ENCODE measurements at regions of chr12 and their contacts with region 1.

Region 1: DNA sequence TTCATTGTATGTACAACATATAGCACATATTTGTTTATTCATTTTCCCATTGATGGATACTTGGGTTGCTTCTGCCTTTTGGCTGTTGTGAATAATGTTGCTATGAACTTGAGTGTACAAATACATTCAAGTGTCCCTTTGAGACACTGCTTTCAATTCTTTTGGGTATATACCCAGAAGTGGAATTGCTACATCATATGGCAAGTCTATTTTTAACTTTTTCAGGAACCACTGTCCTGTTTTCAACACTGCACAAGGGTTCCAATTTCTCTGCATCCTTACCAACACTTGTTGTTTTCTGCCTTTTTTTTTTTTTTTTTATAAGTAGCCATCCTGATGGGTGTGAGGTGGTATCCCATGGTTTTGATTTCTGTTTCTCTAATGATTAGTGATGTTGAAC is 15.9 kb downstream of the RBMS2 start:
- DNase-seq: no peak
- ATAC-seq: no peak
- H3K4me3 ChIP-seq: no peak overlapping the region
- H3K4me3 Mint-ChIP-seq: no peak overlapping the region
- H3K27ac ChIP-seq: no peak overlapping the region
- H3K27ac Mint-ChIP-seq: no peak overlapping the region
- H3K4me1 ChIP-seq: no peaks in the 10 kb centered on the region
- H3K4me1 Mint-ChIP-seq: peaks cover 2 to 4% (median 3%) of the 10 kb centered on the region in 3 donors
- H3K27me3 ChIP-seq: no peaks in the 10 kb centered on the region
- H3K27me3 Mint-ChIP-seq: no peaks in the 10 kb centered on the region

Region 2: GRCh38 chr12:56657416-56658379 is 120.2 kb after region 1 on chr12:
- CTCF ChIA-PET with region 1: no interaction called
- POLR2A ChIA-PET with region 1: interaction called in 1 of 2 experiments, 12 read pairs
- DNase-seq: no peak
- ATAC-seq: no peak
- H3K4me3 ChIP-seq: no peak overlapping the region
- H3K4me3 Mint-ChIP-seq: no peak overlapping the region
- H3K27ac ChIP-seq: no peak overlapping the region
- H3K27ac Mint-ChIP-seq: no peak overlapping the region
- H3K4me1 ChIP-seq: no peaks in the 10 kb centered on the region
- H3K4me1 Mint-ChIP-seq: no peaks in the 10 kb centered on the region
- H3K27me3 ChIP-seq: no peaks in the 10 kb centered on the region
- H3K27me3 Mint-ChIP-seq: no peaks in the 10 kb centered on the region

Measured in T-cell (primary cell).